ENCODE measurements at regions of chr10 and their contacts with region 1.

Region 1: GRCh38 chr10:132307823-132308587 is at the start of gene STK32C:
- DNase-seq: peak; percentile 90 to 93
- ATAC-seq: peak; percentile 75 to 88
- H3K4me3 ChIP-seq: peak within 1 kb of the TSS; percentile 88
- H3K27ac ChIP-seq: peak within 1 kb of the TSS; percentile 95 to 97
- H3K4me1 ChIP-seq: peaks cover 21% of the 10 kb centered on the region
- CTCF ChIP-seq: no peak
- EP300 ChIP-seq: no peak
- POLR2A ChIP-seq: peak; percentile 82
- RAD21 ChIP-seq: peak in 1 of 2 experiments; percentile 47; a peak in 1 of 5 replicates
- polyA plus RNA-seq, gene STK32C: 23.5 and 29.9 TPM in 2 replicates

Region 2: DNA sequence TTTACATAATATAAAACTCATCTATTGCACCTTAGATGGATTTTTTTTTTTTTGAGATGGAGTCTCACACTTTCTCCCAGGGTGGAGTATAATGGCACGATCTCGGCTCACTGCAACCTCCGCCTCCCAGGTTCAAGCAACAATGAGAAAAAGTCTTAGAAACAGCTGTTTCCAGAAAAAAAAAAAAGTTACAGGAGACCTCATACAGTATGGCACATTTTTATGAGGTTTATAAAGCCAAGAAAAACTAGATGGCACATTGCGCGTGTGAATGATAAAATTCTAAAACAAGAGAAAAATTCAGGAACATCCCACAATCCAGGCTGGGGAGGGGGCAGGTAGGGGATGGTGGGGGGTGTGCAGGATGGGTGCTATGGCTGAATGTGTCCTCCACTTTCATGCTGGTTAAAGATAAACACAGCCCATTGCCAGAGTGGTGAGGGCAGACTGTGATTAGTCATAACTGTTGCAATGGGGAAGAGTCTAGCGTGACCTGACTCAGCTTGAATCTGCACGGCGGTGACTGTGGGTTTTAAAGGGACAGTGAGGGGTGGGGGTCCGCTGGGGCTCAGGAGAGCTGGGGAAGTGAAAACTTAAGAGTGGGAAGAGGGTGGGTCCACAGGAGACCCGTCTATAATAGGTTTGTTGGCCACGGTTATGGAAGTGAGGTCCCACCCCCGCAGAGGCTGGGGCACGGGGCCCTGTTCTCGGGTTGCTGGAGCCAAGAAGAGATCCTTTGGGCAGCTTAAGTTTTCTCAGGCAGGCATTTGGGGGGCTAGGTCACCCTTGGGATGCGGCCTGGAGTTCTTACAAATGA is 12.1 kb after region 1 on chr10:
- CTCF ChIA-PET with region 1: interaction called, 4 read pairs
- POLR2A ChIA-PET with region 1: interaction called, 18 read pairs
- DNase-seq: peak; percentile 92 to 97
- ATAC-seq: peak; percentile 93
- H3K4me3 ChIP-seq: peak overlapping the region; percentile 11; the same call in 1 of the 3 replicates
- H3K27ac ChIP-seq: peak overlapping the region; percentile 95 to 99
- H3K4me1 ChIP-seq: peaks cover 70% of the 10 kb centered on the region
- CTCF ChIP-seq: no peak
- EP300 ChIP-seq: peak; percentile 44 to 51; a peak in 2 of 5 replicates
- POLR2A ChIP-seq: no peak
- RAD21 ChIP-seq: no peak; a peak in 1 of 5 replicates

Region 3: GRCh38 chr10:132329565-132330485 is 21.8 kb after region 1 on chr10:
- CTCF ChIA-PET with region 1: no interaction called
- POLR2A ChIA-PET with region 1: interaction called, 17 read pairs
- DNase-seq: peak; percentile 69 to 72
- ATAC-seq: peak in 1 of 2 experiments; percentile 43; a peak in 3 of 6 replicates
- H3K4me3 ChIP-seq: peak overlapping the region; percentile 86
- H3K27ac ChIP-seq: peak overlapping the region; percentile 95 to 96
- H3K4me1 ChIP-seq: peaks cover 50% of the 10 kb centered on the region
- CTCF ChIP-seq: no peak
- EP300 ChIP-seq: no peak
- POLR2A ChIP-seq: no peak
- RAD21 ChIP-seq: no peak

Measured in A549 (cell line).